B cell (primary cell): ENCODE measurements at regions of chr2 and their contacts with region 1.

Region 1: DNA sequence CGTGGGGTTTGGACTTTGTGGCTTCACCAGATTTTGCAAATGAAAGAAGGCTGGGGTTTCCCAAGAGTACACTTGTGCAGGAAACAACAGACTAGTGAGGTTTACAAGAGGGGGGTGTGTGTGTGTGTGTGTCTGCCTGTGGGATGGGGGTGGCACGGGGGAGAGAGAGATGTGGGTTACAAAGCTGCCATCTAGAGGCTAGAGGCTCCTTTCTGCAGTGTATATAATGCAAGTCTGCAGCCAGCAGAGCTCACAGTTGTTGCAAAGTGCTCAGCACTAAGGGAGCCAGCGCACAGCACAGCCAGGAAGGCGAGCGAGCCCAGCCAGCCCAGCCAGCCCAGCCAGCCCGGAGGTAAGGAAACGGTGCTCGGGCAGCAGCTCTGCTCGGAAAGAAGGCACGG is at the start of gene ACKR3:
- DNase-seq: peak; percentile 90
- ATAC-seq: peak; percentile 91
- H3K4me3 ChIP-seq: peak within 1 kb of the TSS; percentile 23 to 67 (median 55)
- H3K4me3 Mint-ChIP-seq: peak within 1 kb of the TSS; percentile 95
- H3K27ac ChIP-seq: peak within 1 kb of the TSS in 1 of 2 donors; percentile 62
- H3K27ac Mint-ChIP-seq: peak within 1 kb of the TSS; percentile 87
- H3K4me1 ChIP-seq: peaks cover 30 to 40% of the 10 kb centered on the region in 2 donors
- H3K4me1 Mint-ChIP-seq: peaks cover 44% of the 10 kb centered on the region
- H3K27me3 ChIP-seq: peaks cover 0 to 4% (median 0%) of the 10 kb centered on the region in 4 experiments
- H3K27me3 Mint-ChIP-seq: no peaks in the 10 kb centered on the region
- CTCF ChIP-seq: peak; percentile 63
- total RNA-seq, gene ACKR3: 5.9 and 7.1 TPM in 2 replicates

Region 2: DNA sequence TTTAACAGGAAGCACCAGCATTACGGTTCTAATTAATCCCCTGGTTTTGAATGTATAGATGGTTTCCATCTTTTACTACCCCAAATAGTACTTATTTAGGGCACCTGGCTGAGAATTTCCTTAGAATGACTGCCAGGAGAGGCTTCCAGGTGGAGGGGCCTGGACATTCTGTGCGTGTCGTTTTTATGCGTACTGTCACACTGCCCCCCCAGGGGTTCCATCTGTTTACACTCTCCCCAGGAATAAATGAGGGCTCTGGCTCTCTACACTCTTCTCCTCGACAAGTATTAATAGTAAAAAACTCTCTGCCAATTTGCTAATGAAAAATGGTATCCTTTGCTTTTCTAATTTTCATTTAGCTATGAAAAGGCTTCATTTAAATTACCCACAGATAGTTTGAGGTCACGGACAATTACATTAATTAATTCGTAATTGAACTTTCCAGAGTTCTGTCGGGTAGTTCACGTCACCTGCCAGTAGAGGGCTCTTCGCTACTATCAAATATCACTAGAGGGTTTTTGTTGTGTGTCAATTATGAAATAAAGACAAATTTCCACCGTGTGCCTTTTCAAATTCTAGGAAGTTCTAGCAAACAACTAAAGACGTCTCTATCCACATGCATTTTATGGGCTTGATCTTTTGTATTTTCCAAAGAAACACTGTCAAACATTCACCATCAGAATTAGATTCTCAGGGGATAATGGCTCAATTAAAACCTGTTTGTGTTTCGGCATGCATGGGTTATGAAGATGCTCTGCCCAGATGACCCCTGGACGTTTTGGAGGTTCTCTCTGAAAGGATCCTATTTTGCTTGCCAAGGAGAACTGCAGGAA is 216.6 kb before region 1 on chr2:
- CTCF ChIA-PET with region 1: interaction called, 86 read pairs
- POLR2A ChIA-PET with region 1: no interaction called
- intact Hi-C with region 1: loop called (anchors 1 kb)
- DNase-seq: peak; percentile 57
- ATAC-seq: peak; percentile 45
- H3K4me3 ChIP-seq: no peak overlapping the region
- H3K4me3 Mint-ChIP-seq: no peak overlapping the region
- H3K27ac ChIP-seq: no peak overlapping the region
- H3K27ac Mint-ChIP-seq: no peak overlapping the region
- H3K4me1 ChIP-seq: no peaks in the 10 kb centered on the region
- H3K4me1 Mint-ChIP-seq: no peaks in the 10 kb centered on the region
- H3K27me3 ChIP-seq: peaks cover 0 to 5% (median 0%) of the 10 kb centered on the region in 4 experiments
- H3K27me3 Mint-ChIP-seq: peaks cover 21% of the 10 kb centered on the region
- CTCF ChIP-seq: peak; percentile 98

Region 3: GRCh38 chr2:236512902-236513435 is 56.6 kb before region 1 on chr2:
- CTCF ChIA-PET with region 1: interaction called, 429 read pairs
- POLR2A ChIA-PET with region 1: interaction called, 6 read pairs
- intact Hi-C with region 1: loop called (anchors 1 kb)
- DNase-seq: peak; percentile 80
- ATAC-seq: peak; percentile 96
- H3K4me3 ChIP-seq: no peak overlapping the region
- H3K4me3 Mint-ChIP-seq: no peak overlapping the region
- H3K27ac ChIP-seq: no peak overlapping the region
- H3K27ac Mint-ChIP-seq: no peak overlapping the region
- H3K4me1 ChIP-seq: peaks cover 13 to 15% of the 10 kb centered on the region in 2 donors
- H3K4me1 Mint-ChIP-seq: peaks cover 10% of the 10 kb centered on the region
- H3K27me3 ChIP-seq: peaks cover 0 to 11% (median 3%) of the 10 kb centered on the region in 4 experiments
- H3K27me3 Mint-ChIP-seq: peaks cover 16% of the 10 kb centered on the region
- CTCF ChIP-seq: peak; percentile 84

Region 4: GRCh38 chr2:236536727-236537398 is 32.7 kb before region 1 on chr2:
- CTCF ChIA-PET with region 1: interaction called, 38 read pairs
- POLR2A ChIA-PET with region 1: interaction called, 5 read pairs
- intact Hi-C with region 1: loop called (anchors 5 kb)
- DNase-seq: peak; percentile 67
- ATAC-seq: peak; percentile 76
- H3K4me3 ChIP-seq: peak overlapping the region in 4 of 5 experiments; percentile 24 to 69 (median 49)
- H3K4me3 Mint-ChIP-seq: peak overlapping the region; percentile 87
- H3K27ac ChIP-seq: peak overlapping the region; percentile 61 to 77
- H3K27ac Mint-ChIP-seq: peak overlapping the region; percentile 94
- H3K4me1 ChIP-seq: peaks cover 30 to 41% of the 10 kb centered on the region in 2 donors
- H3K4me1 Mint-ChIP-seq: peaks cover 42% of the 10 kb centered on the region
- H3K27me3 ChIP-seq: no peaks in the 10 kb centered on the region
- H3K27me3 Mint-ChIP-seq: no peaks in the 10 kb centered on the region
- CTCF ChIP-seq: no peak

Region 5: GRCh38 chr2:236558993-236559978 is 10.3 kb before region 1 on chr2:
- CTCF ChIA-PET with region 1: interaction called, 40 read pairs
- POLR2A ChIA-PET with region 1: interaction called, 6 read pairs
- intact Hi-C with region 1: no loop called
- DNase-seq: no peak
- ATAC-seq: no peak
- H3K4me3 ChIP-seq: no peak overlapping the region
- H3K4me3 Mint-ChIP-seq: no peak overlapping the region
- H3K27ac ChIP-seq: no peak overlapping the region
- H3K27ac Mint-ChIP-seq: no peak overlapping the region
- H3K4me1 ChIP-seq: peaks cover 15 to 20% of the 10 kb centered on the region in 2 donors
- H3K4me1 Mint-ChIP-seq: peaks cover 30% of the 10 kb centered on the region
- H3K27me3 ChIP-seq: no peaks in the 10 kb centered on the region
- H3K27me3 Mint-ChIP-seq: no peaks in the 10 kb centered on the region
- CTCF ChIP-seq: no peak

Region 6: GRCh38 chr2:237060534-237061312 is 491.1 kb after region 1 on chr2:
- CTCF ChIA-PET with region 1: interaction called, 16 read pairs
- POLR2A ChIA-PET with region 1: no interaction called
- intact Hi-C with region 1: no loop called
- DNase-seq: peak; percentile 56
- ATAC-seq: no peak
- H3K4me3 ChIP-seq: no peak overlapping the region
- H3K4me3 Mint-ChIP-seq: no peak overlapping the region
- H3K27ac ChIP-seq: no peak overlapping the region
- H3K27ac Mint-ChIP-seq: no peak overlapping the region
- H3K4me1 ChIP-seq: peaks cover 21 to 33% of the 10 kb centered on the region in 2 donors
- H3K4me1 Mint-ChIP-seq: peaks cover 36% of the 10 kb centered on the region
- H3K27me3 ChIP-seq: peaks cover 0 to 3% (median 0%) of the 10 kb centered on the region in 4 experiments
- H3K27me3 Mint-ChIP-seq: peaks cover 9% of the 10 kb centered on the region
- CTCF ChIP-seq: peak; percentile 55